Endothelial cell of umbilical vein (primary cell): ENCODE measurements at regions of chr15 and their contacts with region 1.

Region 1: GRCh38 chr15:95326431-95327182 is 1003.9 kb upstream of the NR2F2 start:
- DNase-seq: peak; percentile 75
- H3K4me3 ChIP-seq: peak overlapping the region; percentile 64 to 81 (median 65)
- H3K27ac ChIP-seq: peak overlapping the region; percentile 98
- H3K4me1 ChIP-seq: peaks cover 63% of the 10 kb centered on the region
- H3K27me3 ChIP-seq: no peaks in the 10 kb centered on the region
- CTCF ChIP-seq: peak in 1 of 2 donors; percentile 0
- POLR2A ChIP-seq: no peak

Region 2: GRCh38 chr15:95018888-95019545 is 307.6 kb before region 1 on chr15:
- CTCF ChIA-PET with region 1: no interaction called
- POLR2A ChIA-PET with region 1: no interaction called
- dilution Hi-C with region 1: no loop called
- intact Hi-C with region 1: loop called (anchors 1 kb)
- DNase-seq: peak; percentile 86
- H3K4me3 ChIP-seq: peak overlapping the region in 1 of 3 experiments; percentile 55
- H3K27ac ChIP-seq: peak overlapping the region; percentile 83
- H3K4me1 ChIP-seq: peaks cover 39% of the 10 kb centered on the region
- H3K27me3 ChIP-seq: no peaks in the 10 kb centered on the region
- CTCF ChIP-seq: no peak
- POLR2A ChIP-seq: no peak

Region 3: DNA sequence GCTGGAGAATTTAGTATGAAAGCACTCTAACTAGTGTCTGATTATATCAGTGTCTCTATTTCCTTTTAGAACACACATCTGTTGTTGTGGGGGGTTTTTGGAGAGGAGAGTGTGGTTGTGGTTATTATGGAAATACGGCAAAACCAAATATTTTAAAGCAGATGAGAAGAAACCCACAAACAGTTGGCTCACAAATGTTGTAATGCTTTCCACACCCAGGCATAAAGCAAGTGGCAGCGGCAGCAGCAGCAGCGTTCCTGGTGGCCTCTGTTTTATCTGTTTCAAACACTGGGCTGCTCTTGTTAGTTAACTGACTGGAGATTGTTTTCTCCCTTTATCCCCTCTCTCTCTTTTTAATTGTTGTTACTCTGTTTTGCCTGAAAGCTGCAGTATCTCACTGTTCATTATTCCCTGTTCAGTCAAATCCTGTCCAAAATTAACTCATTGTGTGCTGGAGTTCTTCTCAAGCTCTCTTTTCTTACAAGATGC is 41.6 kb before region 1 on chr15:
- CTCF ChIA-PET with region 1: interaction called, 6 read pairs
- POLR2A ChIA-PET with region 1: no interaction called
- dilution Hi-C with region 1: no loop called
- intact Hi-C with region 1: loop called (anchors 1 kb)
- DNase-seq: peak; percentile 88
- H3K4me3 ChIP-seq: no peak overlapping the region
- H3K27ac ChIP-seq: peak overlapping the region; percentile 15
- H3K4me1 ChIP-seq: peaks cover 63% of the 10 kb centered on the region
- H3K27me3 ChIP-seq: no peaks in the 10 kb centered on the region
- CTCF ChIP-seq: peak; percentile 21 to 28
- POLR2A ChIP-seq: no peak

Region 4: DNA sequence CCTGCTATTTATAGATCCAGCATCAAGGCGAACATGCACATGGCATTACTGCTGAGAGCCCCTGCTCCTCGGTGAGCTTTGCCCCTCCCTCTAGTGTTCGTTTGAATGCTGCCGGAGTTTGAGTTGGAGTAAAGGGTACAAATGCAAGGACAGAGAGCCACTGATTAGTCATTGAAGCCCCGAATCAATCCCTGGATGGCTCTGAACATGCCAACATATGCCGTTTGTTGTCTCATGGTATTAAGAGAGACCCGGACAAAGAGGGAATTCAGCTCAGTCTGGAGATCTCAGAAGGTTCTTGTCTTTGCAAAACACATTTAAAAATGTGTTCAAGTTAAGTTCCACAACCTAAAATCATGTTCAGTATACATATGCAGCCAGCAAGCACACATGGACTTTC is 214.7 kb after region 1 on chr15:
- CTCF ChIA-PET with region 1: no interaction called
- POLR2A ChIA-PET with region 1: no interaction called
- dilution Hi-C with region 1: no loop called
- intact Hi-C with region 1: no loop called
- DNase-seq: no peak
- H3K4me3 ChIP-seq: no peak overlapping the region
- H3K27ac ChIP-seq: no peak overlapping the region
- H3K4me1 ChIP-seq: no peaks in the 10 kb centered on the region
- H3K27me3 ChIP-seq: no peaks in the 10 kb centered on the region
- CTCF ChIP-seq: no peak
- POLR2A ChIP-seq: no peak

Region 5: DNA sequence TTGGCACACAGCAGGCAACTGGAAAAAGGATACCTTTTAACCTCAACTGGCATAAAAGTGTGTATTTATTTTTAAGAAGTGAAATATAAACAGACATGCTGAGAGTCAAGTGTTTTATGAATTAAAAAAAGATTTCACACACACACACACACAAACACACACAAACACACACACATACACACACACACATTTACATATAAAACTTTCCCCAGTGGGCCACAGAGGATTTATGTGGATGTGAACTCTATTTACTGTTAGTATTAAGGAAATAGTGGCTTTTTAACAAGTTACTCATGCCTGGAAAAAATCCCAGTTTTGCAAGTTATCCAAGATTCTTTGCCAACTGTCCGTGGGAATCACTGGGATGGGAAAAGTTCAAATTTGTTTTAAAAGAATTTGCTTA is 278.0 kb after region 1 on chr15:
- CTCF ChIA-PET with region 1: no interaction called
- POLR2A ChIA-PET with region 1: no interaction called
- dilution Hi-C with region 1: no loop called
- intact Hi-C with region 1: loop called (anchors 2 kb)
- DNase-seq: peak; percentile 95
- H3K4me3 ChIP-seq: no peak overlapping the region
- H3K27ac ChIP-seq: peak overlapping the region; percentile 50
- H3K4me1 ChIP-seq: peaks cover 33% of the 10 kb centered on the region
- H3K27me3 ChIP-seq: no peaks in the 10 kb centered on the region
- CTCF ChIP-seq: no peak
- POLR2A ChIP-seq: no peak

Region 6: DNA sequence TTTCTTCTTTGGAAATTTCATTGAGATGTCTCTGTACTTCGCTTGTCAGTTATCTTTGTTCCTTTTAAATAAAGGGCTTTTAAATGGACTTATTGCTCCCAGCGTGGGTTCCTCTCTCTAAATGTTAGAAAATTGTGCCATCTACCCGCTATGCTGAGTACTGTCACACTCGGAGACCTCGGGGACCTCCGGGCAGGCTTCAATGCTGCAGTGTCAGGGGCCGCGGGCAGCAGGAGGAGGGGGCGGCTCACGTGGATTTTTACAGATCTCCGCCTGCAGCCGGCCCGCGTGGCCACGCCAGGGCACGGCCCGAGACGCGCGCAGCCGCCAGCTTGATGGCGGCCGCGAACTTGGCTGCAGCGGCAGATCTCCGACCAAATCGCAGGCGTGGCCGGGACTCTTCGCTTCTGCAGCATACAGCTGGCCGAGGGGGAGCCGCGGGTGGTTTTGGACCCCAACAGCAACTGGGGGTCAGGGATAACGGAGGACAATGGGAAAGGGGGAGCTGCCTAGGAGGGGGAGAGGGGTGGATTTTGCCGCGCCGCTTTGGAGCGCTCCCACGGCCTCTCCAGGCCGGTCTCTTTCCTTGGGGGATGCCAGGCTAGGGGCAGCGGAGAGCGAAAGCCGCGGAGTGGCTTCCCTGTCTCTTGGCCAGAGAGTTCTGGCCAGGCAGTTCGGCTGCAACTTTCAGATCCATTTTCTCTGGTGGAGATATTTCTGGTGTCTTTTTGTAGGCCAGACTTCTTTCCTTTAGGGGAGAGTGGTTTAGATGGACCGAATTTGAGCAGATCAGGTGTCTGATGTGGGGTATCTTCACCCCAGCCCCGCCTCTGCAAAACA is 1019.2 kb after region 1 on chr15:
- CTCF ChIA-PET with region 1: interaction called, 3 read pairs
- POLR2A ChIA-PET with region 1: interaction called, 6 read pairs
- dilution Hi-C with region 1: loop called (anchors 25 kb)
- intact Hi-C with region 1: loop called (anchors 2 kb)
- DNase-seq: peak; percentile 86
- H3K4me3 ChIP-seq: peak overlapping the region; percentile 16 to 99 (median 74)
- H3K27ac ChIP-seq: peak overlapping the region; percentile 87
- H3K4me1 ChIP-seq: peaks cover 83% of the 10 kb centered on the region
- H3K27me3 ChIP-seq: no peaks in the 10 kb centered on the region
- CTCF ChIP-seq: peak; percentile 22 to 33
- POLR2A ChIP-seq: no peak